ENCODE measurements at regions of chr15 and their contacts with region 1.

Region 1: GRCh38 chr15:65682404-65682911 is 60.7 kb downstream of the SLC24A1 start:
- DNase-seq: no peak
- H3K4me3 ChIP-seq: no peak overlapping the region
- H3K27ac ChIP-seq: no peak overlapping the region
- H3K4me1 ChIP-seq: no peaks in the 10 kb centered on the region
- H3K27me3 ChIP-seq: no peaks in the 10 kb centered on the region
- CTCF ChIP-seq: no peak
- POLR2A ChIP-seq: no peak

Region 2: DNA sequence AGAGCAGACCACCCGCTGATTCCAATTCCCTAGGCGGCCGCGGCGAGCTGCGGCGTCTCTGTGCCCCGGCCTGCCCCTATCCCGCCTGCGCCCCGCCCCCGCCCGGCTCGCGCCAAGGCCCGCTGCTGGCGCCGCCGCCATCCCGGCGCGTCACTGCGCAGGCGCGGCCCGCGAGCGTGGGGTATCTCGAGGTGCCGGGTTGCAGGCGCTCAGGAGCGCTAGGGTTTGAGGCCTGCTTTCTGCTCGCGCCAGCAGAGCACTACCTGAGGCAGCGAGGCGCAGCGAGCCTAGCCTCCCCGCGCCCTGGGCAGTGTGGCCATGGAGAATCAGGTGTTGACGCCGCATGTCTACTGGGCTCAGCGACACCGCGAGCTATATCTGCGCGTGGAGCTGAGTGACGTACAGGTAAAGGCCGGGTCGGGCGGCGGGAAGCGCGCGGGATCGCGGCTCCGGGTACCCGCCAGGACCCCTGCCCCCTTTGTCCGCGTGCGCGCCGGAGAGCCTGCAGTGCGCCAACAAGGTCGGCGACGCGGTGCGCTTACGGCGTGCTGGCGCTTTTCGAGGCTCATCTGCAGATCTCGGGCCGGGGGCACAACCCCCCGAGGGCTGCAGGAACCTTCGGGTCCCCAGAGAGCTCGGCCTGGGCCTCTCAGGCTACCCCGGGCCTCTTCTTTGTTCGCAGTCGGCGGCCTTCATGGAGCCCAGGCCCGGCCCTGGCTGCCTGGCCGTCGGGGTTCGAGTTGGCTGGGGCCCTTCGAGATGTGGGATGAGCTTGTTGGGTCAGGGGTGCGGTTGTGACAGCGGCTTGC is 151.9 kb before region 1 on chr15 and contains the start of gene HACD3:
- intact Hi-C with region 1: no loop called
- DNase-seq: peak; percentile 89 to 90
- H3K4me3 ChIP-seq: peak within 1 kb of the TSS; percentile 37 to 85 (median 77)
- H3K27ac ChIP-seq: peak within 1 kb of the TSS; percentile 75 to 79 (median 78)
- H3K4me1 ChIP-seq: peaks cover 9 to 17% of the 10 kb centered on the region in 2 donors
- H3K27me3 ChIP-seq: no peaks in the 10 kb centered on the region
- CTCF ChIP-seq: no peak
- POLR2A ChIP-seq: peak in 1 of 2 donors; percentile 77
- total RNA-seq, gene HACD3: 103 to 172 (median 128) TPM

Region 3: GRCh38 chr15:65818927-65819562 is 136.6 kb after region 1 on chr15:
- intact Hi-C with region 1: loop called (anchors 10 kb)
- DNase-seq: no peak
- H3K4me3 ChIP-seq: no peak overlapping the region
- H3K27ac ChIP-seq: no peak overlapping the region
- H3K4me1 ChIP-seq: peaks cover 0 to 4% of the 10 kb centered on the region in 2 donors
- H3K27me3 ChIP-seq: no peaks in the 10 kb centered on the region
- CTCF ChIP-seq: no peak
- POLR2A ChIP-seq: no peak